ENCODE measurements at regions of chr1 and their contacts with region 1.

Region 1: GRCh38 chr1:244864253-244865027 is at the start of gene HNRNPU:
- DNase-seq: peak; percentile 99
- H3K4me3 ChIP-seq: peak within 1 kb of the TSS; percentile 92 to 99 (median 98)
- H3K27ac ChIP-seq: peak within 1 kb of the TSS; percentile 99 to 100 (median 100)
- H3K4me1 ChIP-seq: peaks cover 0 to 41% (median 37%) of the 10 kb centered on the region in 4 donors
- H3K27me3 ChIP-seq: no peaks in the 10 kb centered on the region
- CTCF ChIP-seq: peak in 2 of 4 experiments; percentile 14 to 47
- EP300 ChIP-seq: peak in 2 of 4 donors; percentile 69 to 82
- POLR2A ChIP-seq: peak; percentile 92 to 97
- total RNA-seq, gene HNRNPU: 264 to 339 (median 282) TPM

Region 2: DNA sequence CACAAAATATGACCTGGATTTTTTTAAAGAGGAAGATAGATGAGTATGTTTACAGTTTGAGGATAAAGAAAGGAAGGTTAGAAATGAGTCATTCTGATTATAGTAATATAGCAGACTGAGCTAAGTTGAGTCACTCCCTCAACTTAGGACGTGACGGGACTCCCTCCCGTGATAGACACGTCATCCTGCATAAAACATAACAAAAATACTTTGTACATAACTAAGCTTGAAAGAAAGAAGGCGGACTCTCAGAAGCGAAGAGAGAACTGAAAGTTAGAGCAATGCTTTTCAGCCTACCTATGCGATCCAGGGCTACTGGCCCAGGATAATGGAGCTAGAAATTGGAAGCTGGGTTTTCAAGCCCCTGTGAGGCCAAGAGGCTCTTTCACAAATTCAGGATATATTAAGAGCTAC is 264.5 kb before region 1 on chr1:
- intact Hi-C with region 1: loop called (anchors 5 kb)
- DNase-seq: no peak
- H3K4me3 ChIP-seq: peak overlapping the region in 1 of 4 donors; percentile 6
- H3K27ac ChIP-seq: peak overlapping the region in 2 of 4 donors; percentile 33 to 48
- H3K4me1 ChIP-seq: peaks cover 0 to 9% (median 0%) of the 10 kb centered on the region in 4 donors
- H3K27me3 ChIP-seq: no peaks in the 10 kb centered on the region
- CTCF ChIP-seq: no peak
- EP300 ChIP-seq: no peak
- POLR2A ChIP-seq: no peak

Region 3: GRCh38 chr1:244801246-244801645 is 63.2 kb before region 1 on chr1:
- intact Hi-C with region 1: no loop called
- DNase-seq: no peak
- H3K4me3 ChIP-seq: no peak overlapping the region
- H3K27ac ChIP-seq: no peak overlapping the region
- H3K4me1 ChIP-seq: no peaks in the 10 kb centered on the region
- H3K27me3 ChIP-seq: no peaks in the 10 kb centered on the region
- CTCF ChIP-seq: peak in 3 of 4 experiments; percentile 23 to 67 (median 43)
- EP300 ChIP-seq: no peak
- POLR2A ChIP-seq: no peak

Region 4: DNA sequence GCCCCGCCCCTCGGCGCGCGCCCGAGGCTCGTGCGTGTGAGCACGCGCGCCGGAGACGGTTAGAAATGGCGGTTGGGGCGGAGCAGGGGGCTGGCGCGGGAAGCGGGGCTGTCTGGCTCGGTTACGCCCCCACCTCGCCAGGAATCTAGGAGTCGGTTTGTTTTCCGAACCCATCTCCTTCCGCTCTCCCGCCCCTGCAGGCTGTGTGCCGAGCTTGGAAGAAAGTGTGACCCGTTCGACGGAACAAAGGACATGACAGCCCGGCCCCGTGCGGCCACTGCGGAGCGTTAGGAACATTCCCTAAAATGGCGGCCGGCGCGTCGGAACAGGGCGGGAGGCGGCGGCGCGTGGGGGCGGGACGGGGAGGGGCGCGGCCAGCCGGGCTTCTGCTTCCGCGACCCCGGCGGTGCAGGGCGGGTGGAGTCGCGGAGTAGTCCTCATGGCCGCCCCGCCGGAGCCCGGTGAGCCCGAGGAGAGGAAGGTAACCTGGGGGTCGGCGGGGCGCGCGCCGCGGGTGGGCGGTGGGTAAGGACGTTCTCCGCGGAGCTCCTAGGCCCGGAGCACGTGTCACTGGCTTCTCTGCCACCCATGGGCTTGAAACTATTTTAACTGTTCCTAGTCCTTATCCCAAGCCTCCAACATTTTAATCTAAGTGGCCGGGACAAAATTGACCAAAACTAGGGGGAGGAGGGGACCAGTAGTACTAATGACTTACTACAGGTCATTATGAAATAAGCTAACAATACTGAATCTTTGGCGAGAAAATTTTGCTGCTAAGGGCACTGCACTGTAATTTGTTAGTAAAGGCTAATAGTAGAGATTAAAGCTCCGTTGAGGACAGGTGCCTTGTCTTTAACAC is 28.9 kb before region 1 on chr1 and contains the start of gene COX20:
- intact Hi-C with region 1: loop called (anchors 1 kb)
- DNase-seq: peak; percentile 96
- H3K4me3 ChIP-seq: peak within 1 kb of the TSS; percentile 70 to 81 (median 76)
- H3K27ac ChIP-seq: peak within 1 kb of the TSS; percentile 98 to 100 (median 99)
- H3K4me1 ChIP-seq: peaks cover 0 to 56% (median 47%) of the 10 kb centered on the region in 4 donors
- H3K27me3 ChIP-seq: no peaks in the 10 kb centered on the region
- CTCF ChIP-seq: no peak
- EP300 ChIP-seq: peak in 1 of 4 donors; percentile 50
- POLR2A ChIP-seq: peak; percentile 42 to 45
- total RNA-seq, gene COX20: 59.7 to 132 (median 79.9) TPM

Region 5: DNA sequence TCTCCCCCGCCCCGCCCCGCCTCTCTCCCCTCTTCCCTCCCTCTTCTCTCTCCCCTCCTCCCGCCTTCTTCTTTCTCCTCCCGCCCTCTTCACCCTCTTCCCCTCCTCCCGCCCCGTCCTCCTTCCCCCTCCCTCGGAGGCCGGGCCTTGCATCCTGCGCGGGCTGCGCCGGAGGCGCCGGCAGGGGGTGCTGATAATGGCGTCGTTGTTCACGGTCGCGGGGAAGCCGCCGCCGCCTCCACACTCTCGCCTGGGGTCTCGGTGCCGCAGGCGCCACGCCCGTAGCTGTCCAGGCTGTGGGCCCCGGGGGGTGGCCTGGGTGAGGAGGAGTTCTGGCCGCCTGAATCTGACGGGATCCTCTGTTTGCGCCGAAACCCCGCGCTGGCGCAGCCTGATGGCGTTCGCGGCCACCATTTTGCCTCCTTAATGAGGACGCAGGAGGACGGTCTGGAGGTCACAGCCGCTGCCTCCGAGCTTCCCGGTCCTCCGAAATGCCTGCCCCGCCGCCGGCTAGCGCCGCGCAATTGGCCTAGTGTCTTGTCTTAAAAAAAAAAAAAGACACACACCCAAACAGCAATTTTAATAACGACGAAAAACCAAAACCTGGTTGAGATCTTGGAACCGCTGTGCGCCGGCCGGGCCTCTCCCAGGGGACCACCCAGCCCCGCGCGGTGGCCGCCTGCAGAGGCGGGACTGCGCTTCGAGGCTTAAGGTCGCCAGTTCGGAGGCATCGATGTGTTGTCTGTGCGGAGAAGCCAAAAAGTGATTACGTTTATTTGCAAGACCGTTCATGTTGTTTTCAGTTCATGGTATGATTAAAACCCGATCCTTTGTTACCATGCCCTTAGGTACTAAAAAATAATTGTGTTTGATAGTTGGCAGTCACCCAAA is 106.5 kb after region 1 on chr1:
- intact Hi-C with region 1: loop called (anchors 1 kb)
- DNase-seq: peak; percentile 97
- H3K4me3 ChIP-seq: peak overlapping the region; percentile 64 to 89 (median 87)
- H3K27ac ChIP-seq: peak overlapping the region; percentile 99 to 100 (median 100)
- H3K4me1 ChIP-seq: peaks cover 0 to 28% (median 22%) of the 10 kb centered on the region in 4 donors
- H3K27me3 ChIP-seq: no peaks in the 10 kb centered on the region
- CTCF ChIP-seq: peak; percentile 57 to 73 (median 58)
- EP300 ChIP-seq: no peak
- POLR2A ChIP-seq: peak; percentile 55 to 65

Region 6: GRCh38 chr1:245156081-245156735 is 291.8 kb after region 1 on chr1:
- intact Hi-C with region 1: loop called (anchors 10 kb)
- DNase-seq: peak; percentile 88
- H3K4me3 ChIP-seq: peak overlapping the region; percentile 30 to 58 (median 52)
- H3K27ac ChIP-seq: peak overlapping the region in 1 of 4 donors; percentile 34
- H3K4me1 ChIP-seq: peaks cover 0 to 42% (median 41%) of the 10 kb centered on the region in 4 donors
- H3K27me3 ChIP-seq: peaks cover 10 to 64% (median 36%) of the 10 kb centered on the region in 3 donors
- CTCF ChIP-seq: peak in 3 of 4 experiments; percentile 46 to 83 (median 53)
- EP300 ChIP-seq: no peak
- POLR2A ChIP-seq: no peak